Psoas muscle (tissue), 8 donors: ENCODE measurements at regions of chr1 and their contacts with region 1.

Region 1: GRCh38 chr1:21963477-21964217 is 13.2 kb upstream of the CELA3B start:
- DNase-seq: peak; percentile 76 to 85
- ATAC-seq: peak; percentile 90 to 97 (median 92)
- H3K4me3 ChIP-seq: no peak overlapping the region
- H3K27ac ChIP-seq: no peak overlapping the region
- H3K4me1 ChIP-seq: no peaks in the 10 kb centered on the region
- H3K27me3 ChIP-seq: no peaks in the 10 kb centered on the region
- CTCF ChIP-seq: peak; percentile 93

Region 2: DNA sequence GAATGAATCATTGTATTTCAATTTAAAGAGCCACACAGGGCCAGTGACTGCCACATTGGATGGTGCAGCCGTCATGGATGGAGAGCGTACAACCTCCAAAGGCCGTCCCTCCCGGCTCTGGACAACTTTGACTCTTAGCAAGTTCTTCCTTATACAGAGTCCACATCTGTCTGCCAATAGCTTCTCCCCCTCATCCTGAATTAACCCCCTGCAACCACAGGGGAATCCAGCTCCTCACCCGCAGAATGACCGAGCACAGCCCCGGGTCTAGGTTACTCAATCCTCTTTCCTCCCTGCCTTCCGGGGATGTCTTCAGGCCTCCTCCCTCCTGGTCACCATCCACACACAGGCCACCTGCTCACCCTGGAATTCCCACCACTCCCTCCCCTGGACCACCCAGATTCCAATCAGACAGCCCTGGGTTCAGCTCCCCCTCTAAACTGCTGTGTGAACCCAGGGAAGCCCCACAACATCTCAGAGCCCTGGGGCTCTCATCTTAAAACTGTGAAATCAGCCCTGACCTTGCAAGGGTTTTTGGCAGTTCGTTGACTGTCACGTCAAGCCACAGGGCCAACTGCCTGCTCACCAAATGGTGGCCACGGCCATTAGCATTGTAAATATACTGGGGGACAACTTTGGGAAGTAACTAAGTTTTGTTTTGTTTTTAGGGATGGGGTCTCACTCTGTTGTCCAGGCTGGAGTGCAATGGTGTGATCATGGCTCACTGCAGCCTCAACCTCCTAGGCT is 80.8 kb before region 1 on chr1:
- intact Hi-C with region 1: loop called in 1 of 2 experiments (anchors 5 kb)
- DNase-seq: peak in 1 of 2 donors; percentile 56
- ATAC-seq: peak in 3 of 4 donors; percentile 9 to 29 (median 13)
- H3K4me3 ChIP-seq: no peak overlapping the region
- H3K27ac ChIP-seq: no peak overlapping the region
- H3K4me1 ChIP-seq: no peaks in the 10 kb centered on the region
- H3K27me3 ChIP-seq: no peaks in the 10 kb centered on the region
- CTCF ChIP-seq: no peak

Region 3: GRCh38 chr1:21896652-21897532 is 66.8 kb before region 1 on chr1:
- intact Hi-C with region 1: loop called (anchors 5 kb)
- DNase-seq: peak; percentile 87 to 93
- ATAC-seq: peak; percentile 75 to 85 (median 78)
- H3K4me3 ChIP-seq: no peak overlapping the region
- H3K27ac ChIP-seq: peak overlapping the region; percentile 53
- H3K4me1 ChIP-seq: peaks cover 65% of the 10 kb centered on the region
- H3K27me3 ChIP-seq: no peaks in the 10 kb centered on the region
- CTCF ChIP-seq: no peak

Region 4: GRCh38 chr1:21939650-21940374 is 23.8 kb before region 1 on chr1:
- intact Hi-C with region 1: no loop called
- DNase-seq: peak; percentile 92 to 94
- ATAC-seq: peak; percentile 42 to 68 (median 63)
- H3K4me3 ChIP-seq: no peak overlapping the region
- H3K27ac ChIP-seq: peak overlapping the region; percentile 69
- H3K4me1 ChIP-seq: peaks cover 30% of the 10 kb centered on the region
- H3K27me3 ChIP-seq: no peaks in the 10 kb centered on the region
- CTCF ChIP-seq: peak; percentile 44